ENCODE measurements at regions of chr14 and their contacts with region 1.

Region 1: DNA sequence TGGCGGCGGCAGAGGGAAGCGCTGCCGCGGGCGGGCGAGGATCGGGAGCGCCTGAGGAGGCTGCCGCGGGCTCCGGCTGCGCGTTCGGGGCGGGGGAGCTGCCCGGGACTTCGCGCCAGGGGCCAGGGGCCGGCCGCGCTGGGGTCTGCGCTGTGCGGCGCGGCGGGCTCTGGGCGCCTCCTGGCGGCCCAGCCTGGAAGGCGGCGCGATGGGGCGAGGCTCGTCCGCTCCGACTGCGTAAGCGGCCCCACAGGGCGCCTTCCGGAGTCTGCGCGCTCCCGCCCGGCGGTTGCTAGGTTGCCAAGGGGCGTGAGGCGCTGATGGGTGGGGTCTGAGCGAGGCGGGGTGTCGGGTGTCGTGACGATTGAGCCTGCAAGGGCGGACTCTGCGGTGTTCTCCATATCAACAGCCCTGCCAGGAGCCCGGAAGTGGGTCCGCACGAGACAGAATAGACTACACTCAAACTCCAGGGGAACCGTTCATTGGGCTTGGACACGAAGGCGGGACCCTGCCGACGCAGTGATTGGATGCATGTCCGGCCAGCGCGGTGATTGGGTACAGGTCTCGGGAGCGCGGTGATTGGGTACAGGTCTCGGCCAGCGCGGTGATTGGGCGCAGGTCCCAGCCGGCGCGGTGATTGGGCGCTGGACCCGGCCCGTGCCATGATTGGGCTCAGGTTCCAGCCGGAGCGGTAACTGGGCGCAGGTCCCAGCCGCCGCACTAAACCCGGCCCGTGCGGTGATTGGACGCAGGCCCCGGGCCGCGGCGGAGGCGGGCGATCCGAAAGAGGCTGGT is at the start of gene TEDC1:
- DNase-seq: peak; percentile 100
- ATAC-seq: peak; percentile 70
- H3K4me3 Mint-ChIP-seq: peak within 1 kb of the TSS; percentile 86
- H3K27ac Mint-ChIP-seq: peak within 1 kb of the TSS; percentile 93
- H3K4me1 Mint-ChIP-seq: peaks cover 25% of the 10 kb centered on the region
- H3K27me3 Mint-ChIP-seq: no peaks in the 10 kb centered on the region
- total RNA-seq, gene TEDC1: 56.5 to 61.8 TPM

Region 2: GRCh38 chr14:105275267-105275946 is 215.4 kb before region 1 on chr14:
- CTCF ChIA-PET with region 1: no interaction called
- POLR2A ChIA-PET with region 1: no interaction called
- DNase-seq: no peak
- ATAC-seq: no peak
- H3K4me3 Mint-ChIP-seq: no peak overlapping the region
- H3K27ac Mint-ChIP-seq: no peak overlapping the region
- H3K4me1 Mint-ChIP-seq: no peaks in the 10 kb centered on the region
- H3K27me3 Mint-ChIP-seq: no peaks in the 10 kb centered on the region

Region 3: GRCh38 chr14:105375635-105376057 is 115.1 kb before region 1 on chr14:
- CTCF ChIA-PET with region 1: interaction called, 157 read pairs
- POLR2A ChIA-PET with region 1: interaction called, 9 read pairs
- DNase-seq: peak; percentile 62
- ATAC-seq: peak; percentile 61
- H3K4me3 Mint-ChIP-seq: no peak overlapping the region
- H3K27ac Mint-ChIP-seq: peak overlapping the region; percentile 86
- H3K4me1 Mint-ChIP-seq: peaks cover 19% of the 10 kb centered on the region
- H3K27me3 Mint-ChIP-seq: no peaks in the 10 kb centered on the region

Region 4: DNA sequence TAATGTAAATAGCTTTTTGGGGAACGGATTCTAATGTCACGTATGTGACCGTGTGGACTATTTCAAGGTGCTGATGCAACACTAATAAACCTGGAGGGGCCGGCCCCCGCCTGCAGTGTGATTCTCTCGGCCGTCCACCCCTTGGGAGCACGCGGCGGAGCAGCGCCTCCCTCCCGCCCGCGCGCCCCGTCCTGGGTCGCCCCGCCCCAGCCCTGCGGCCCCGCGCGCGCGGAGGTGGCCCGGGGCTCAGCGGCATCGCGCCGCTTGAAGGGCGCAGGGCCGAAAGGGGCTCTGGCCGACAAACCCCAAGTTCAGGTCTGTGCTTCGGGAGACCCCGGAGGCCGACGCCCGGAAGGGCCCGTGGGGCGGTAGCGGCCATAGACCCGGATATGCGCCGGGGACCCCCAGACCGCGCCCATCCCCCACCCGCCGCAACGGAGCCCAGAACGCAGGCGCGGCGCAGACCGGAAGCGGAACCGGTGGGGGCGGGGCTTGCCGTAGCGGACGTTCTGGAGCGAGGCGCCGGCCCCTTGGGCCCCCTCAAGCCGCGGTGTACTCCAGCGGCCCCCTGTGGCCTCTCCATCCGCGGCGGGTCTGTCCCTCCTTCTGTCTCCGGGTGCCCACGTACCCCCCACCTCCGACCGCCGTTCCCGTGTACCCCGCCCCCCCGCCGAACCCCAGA is 92.6 kb before region 1 on chr14 and contains the start of gene TEX22:
- CTCF ChIA-PET with region 1: interaction called, 18 read pairs
- POLR2A ChIA-PET with region 1: interaction called, 3 read pairs
- DNase-seq: peak; percentile 93
- ATAC-seq: peak; percentile 88
- H3K4me3 Mint-ChIP-seq: peak within 1 kb of the TSS; percentile 95
- H3K27ac Mint-ChIP-seq: peak within 1 kb of the TSS; percentile 94
- H3K4me1 Mint-ChIP-seq: peaks cover 39% of the 10 kb centered on the region
- H3K27me3 Mint-ChIP-seq: no peaks in the 10 kb centered on the region
- total RNA-seq, gene TEX22: 1.9 to 2.4 TPM

Region 5: GRCh38 chr14:105527661-105528581 is 37.2 kb after region 1 on chr14:
- CTCF ChIA-PET with region 1: interaction called, 17 read pairs
- POLR2A ChIA-PET with region 1: interaction called, 11 read pairs
- DNase-seq: peak; percentile 86
- ATAC-seq: peak; percentile 73
- H3K4me3 Mint-ChIP-seq: peak overlapping the region; percentile 73
- H3K27ac Mint-ChIP-seq: peak overlapping the region; percentile 75
- H3K4me1 Mint-ChIP-seq: peaks cover 37% of the 10 kb centered on the region
- H3K27me3 Mint-ChIP-seq: peaks cover 26% of the 10 kb centered on the region

Measured in activated CD8-positive, alpha-beta T cell treated with anti-CD3 and anti-CD28 coated beads, Interleukin-2, amount 10 ng/mL, durations not matched to agents 7 days and 5 days (primary cell).